Activated naive CD8-positive, alpha-beta T cell treated with anti-CD3 and anti-CD28 coated beads, Interleukin-2, amount 10 ng/mL, durations not matched to agents 7 days and 5 days (primary cell): ENCODE measurements at regions of chr12 and their contacts with region 1.

Region 1: GRCh38 chr12:100200463-100201181 is at the start of gene ACTR6:
- DNase-seq: peak; percentile 94
- ATAC-seq: peak; percentile 74
- H3K4me3 Mint-ChIP-seq: peak within 1 kb of the TSS; percentile 95
- H3K27ac Mint-ChIP-seq: peak within 1 kb of the TSS; percentile 98
- H3K4me1 Mint-ChIP-seq: peaks cover 23% of the 10 kb centered on the region
- H3K27me3 Mint-ChIP-seq: no peaks in the 10 kb centered on the region
- total RNA-seq, gene ACTR6: 36.0 to 38.2 TPM

Region 2: DNA sequence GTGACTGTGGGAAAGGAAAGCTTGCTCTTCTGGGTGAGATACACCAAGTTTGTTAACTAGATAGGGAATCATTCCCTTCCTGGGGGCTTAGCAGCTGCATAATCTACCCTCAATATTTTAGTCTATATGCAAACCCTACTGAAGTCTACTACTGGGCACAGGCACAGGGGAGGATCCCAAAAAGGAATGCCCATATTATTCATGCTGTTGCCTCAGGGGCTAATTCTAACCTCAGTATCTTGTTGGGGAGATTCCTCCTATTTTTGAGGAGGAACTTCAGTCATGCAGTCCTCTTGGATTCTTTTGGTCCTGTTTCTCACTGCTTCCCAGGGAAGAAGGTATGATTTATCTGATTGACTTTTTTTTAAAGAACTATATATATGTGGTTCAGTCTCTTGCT is 157.0 kb before region 1 on chr12:
- POLR2A ChIA-PET with region 1: no interaction called
- DNase-seq: no peak
- ATAC-seq: no peak
- H3K4me3 Mint-ChIP-seq: no peak overlapping the region
- H3K27ac Mint-ChIP-seq: no peak overlapping the region
- H3K4me1 Mint-ChIP-seq: no peaks in the 10 kb centered on the region
- H3K27me3 Mint-ChIP-seq: no peaks in the 10 kb centered on the region

Region 3: GRCh38 chr12:100170313-100170858 is 30.2 kb before region 1 on chr12:
- POLR2A ChIA-PET with region 1: no interaction called
- DNase-seq: no peak
- ATAC-seq: no peak
- H3K4me3 Mint-ChIP-seq: no peak overlapping the region
- H3K27ac Mint-ChIP-seq: no peak overlapping the region
- H3K4me1 Mint-ChIP-seq: no peaks in the 10 kb centered on the region
- H3K27me3 Mint-ChIP-seq: no peaks in the 10 kb centered on the region

Region 4: DNA sequence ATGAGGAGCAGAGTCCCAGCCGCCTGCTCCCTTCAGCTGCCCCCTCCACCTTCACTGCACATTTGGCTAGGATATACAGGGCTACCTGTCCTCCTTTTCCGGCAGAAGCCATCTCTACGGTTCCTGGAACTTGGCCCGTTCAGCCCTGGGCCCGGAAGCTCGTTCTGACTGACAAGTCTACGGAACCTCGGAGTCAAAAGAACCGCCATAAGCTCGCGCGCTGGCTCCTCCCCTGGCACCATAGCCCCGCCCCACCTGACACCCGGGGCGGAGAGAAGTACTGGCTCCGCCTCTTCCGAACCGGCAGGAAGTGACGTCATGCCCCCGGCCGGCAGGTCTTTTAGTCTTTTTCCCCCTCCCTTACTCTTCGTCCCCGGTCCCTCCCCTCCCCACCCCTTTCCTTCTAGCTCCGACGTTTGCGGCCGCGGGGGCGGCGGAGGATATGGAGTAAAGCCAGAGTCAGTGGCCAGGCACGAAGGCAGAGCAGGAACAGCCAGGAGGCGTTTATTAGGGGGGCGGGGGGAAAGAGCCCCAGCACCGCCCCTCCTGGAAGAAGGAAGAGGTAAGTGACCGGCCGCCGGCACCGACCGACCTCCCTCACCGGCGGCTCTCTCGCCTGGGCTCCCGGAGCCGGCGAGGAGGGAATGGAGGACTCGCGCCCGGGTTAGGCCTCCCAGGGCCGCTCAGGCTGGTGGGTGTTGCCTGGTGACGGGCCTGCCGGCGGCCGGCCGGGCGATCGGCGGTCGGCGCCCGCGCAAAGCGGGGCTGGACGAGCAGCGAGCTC is 66.4 kb after region 1 on chr12 and contains the starts of genes DEPDC4 and SCYL2:
- POLR2A ChIA-PET with region 1: interaction called, 26 read pairs
- DNase-seq: peak; percentile 96
- ATAC-seq: peak; percentile 84
- H3K4me3 Mint-ChIP-seq: peak within 1 kb of the TSS; percentile 91
- H3K27ac Mint-ChIP-seq: peak within 1 kb of the TSS; percentile 97
- H3K4me1 Mint-ChIP-seq: peaks cover 18% of the 10 kb centered on the region
- H3K27me3 Mint-ChIP-seq: no peaks in the 10 kb centered on the region
- total RNA-seq, gene DEPDC4: 2.0 to 2.3 TPM
- total RNA-seq, gene SCYL2: 37.2 to 37.8 TPM

Region 5: DNA sequence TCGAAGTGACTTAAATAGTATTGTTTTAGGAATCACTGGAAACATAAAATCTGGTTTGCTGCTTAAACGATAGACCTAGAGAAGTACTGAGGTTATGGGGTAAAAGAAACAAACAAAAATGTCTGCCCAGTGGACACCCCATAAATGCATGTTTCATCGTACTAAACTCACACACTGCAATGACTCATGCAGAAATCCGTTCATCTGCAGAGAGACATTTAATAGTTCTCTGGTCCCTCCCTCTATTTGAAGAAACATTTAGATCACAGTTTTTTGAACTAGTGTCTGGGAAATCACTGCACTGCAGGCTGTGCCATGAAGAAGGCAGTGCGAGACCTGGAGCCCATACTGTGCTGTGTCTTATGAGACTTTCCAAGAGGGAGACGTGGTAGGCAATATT is 181.7 kb after region 1 on chr12:
- POLR2A ChIA-PET with region 1: no interaction called
- DNase-seq: no peak
- ATAC-seq: no peak
- H3K4me3 Mint-ChIP-seq: no peak overlapping the region
- H3K27ac Mint-ChIP-seq: no peak overlapping the region
- H3K4me1 Mint-ChIP-seq: no peaks in the 10 kb centered on the region
- H3K27me3 Mint-ChIP-seq: no peaks in the 10 kb centered on the region